ENCODE measurements at regions of chr6 and their contacts with region 1.

Region 1: GRCh38 chr6:106643061-106643460 is 13.7 kb downstream of the QRSL1 start:
- DNase-seq: peak; percentile 53
- H3K4me3 Mint-ChIP-seq: peak overlapping the region; percentile 52
- H3K27ac Mint-ChIP-seq: peak overlapping the region; percentile 95
- H3K4me1 Mint-ChIP-seq: peaks cover 15% of the 10 kb centered on the region
- H3K27me3 Mint-ChIP-seq: no peaks in the 10 kb centered on the region
- CTCF ChIP-seq: no peak

Region 2: DNA sequence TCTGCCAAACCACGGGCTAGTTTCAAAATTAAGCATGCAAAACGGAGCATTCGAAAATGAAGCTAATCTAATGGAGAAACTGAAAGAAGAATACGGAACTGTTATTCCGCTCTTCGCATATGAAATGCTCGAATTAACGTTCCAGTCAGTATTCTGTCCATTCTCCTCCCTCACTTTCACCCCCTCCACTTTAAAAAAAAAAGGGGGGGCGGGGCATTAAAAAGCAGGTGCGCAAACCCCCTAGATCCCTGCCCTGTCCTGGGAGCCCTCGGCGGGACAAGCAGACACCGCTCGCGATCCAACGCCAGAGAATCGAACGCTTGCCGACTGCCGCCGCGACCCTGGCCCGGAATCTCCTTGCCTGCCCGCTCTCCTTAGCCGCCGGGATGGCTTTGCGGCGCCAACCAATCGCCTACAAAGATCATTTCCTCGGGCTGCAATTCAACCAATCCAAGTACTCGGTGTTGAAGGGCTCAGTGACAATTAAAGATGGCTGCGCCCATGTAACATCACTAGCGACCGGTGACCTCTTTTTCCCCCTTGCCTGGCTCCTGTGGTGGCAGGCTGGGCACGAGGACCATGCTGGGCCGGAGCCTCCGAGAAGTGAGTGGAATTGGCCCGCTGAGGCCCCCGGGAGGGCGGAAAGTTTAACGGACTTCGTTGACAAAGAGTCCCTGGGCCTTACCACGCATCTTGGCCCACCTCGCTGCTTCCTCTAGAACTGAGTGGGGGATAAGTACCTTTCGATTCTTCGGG is 13.8 kb before region 1 on chr6 and contains the starts of genes QRSL1 and RTN4IP1:
- CTCF ChIA-PET with region 1: interaction called, 4 read pairs
- POLR2A ChIA-PET with region 1: interaction called, 13 read pairs
- intact Hi-C with region 1: no loop called
- DNase-seq: peak; percentile 94
- H3K4me3 Mint-ChIP-seq: peak within 1 kb of the TSS; percentile 97
- H3K27ac Mint-ChIP-seq: peak within 1 kb of the TSS; percentile 97
- H3K4me1 Mint-ChIP-seq: peaks cover 20% of the 10 kb centered on the region
- H3K27me3 Mint-ChIP-seq: no peaks in the 10 kb centered on the region
- CTCF ChIP-seq: no peak
- total RNA-seq, gene QRSL1: 14.0 and 16.4 TPM in 2 replicates
- total RNA-seq, gene RTN4IP1: 6.2 and 6.5 TPM in 2 replicates

Measured in MCF 10A (cell line).